Activated T-helper 1 cell treated with anti-CD3 and anti-CD28 coated beads, Interleukin-12 subunit alpha, Interleukin-12 subunit beta, Interleukin-2, Interleukin-4 antibody, amounts not matched to agents 30 ng/mL and 10 ng/mL and 1 ng/mL, durations not matched to agents 14 hours and 24 hours and 36 hours (primary cell): ENCODE measurements at regions of chr11 and their contacts with region 1.

Region 1: DNA sequence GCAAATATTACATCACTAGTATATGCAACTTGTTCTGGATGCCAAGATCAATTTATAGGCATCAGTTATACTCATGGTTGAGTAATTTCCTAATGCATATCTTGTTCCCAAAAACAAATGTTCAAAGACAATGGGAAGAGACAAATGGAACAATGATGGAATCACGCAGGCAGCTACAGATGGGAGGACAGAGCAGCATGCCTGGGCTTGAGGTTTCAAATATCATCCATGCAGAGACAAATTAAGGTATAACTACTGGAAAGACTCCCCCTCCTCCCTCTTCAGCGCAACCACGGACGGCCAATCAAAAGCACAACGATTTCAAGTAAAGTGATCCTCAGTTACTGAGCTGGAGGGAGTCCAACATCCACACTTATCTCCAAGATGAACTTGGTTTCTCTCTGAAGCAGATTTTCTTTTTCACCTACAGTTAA is 106.8 kb downstream of the CCDC83 start:
- DNase-seq: no peak
- H3K4me3 Mint-ChIP-seq: no peak overlapping the region
- H3K27ac Mint-ChIP-seq: no peak overlapping the region
- H3K4me1 Mint-ChIP-seq: peaks cover 18% of the 10 kb centered on the region
- H3K27me3 Mint-ChIP-seq: no peaks in the 10 kb centered on the region

Region 2: GRCh38 chr11:86003654-86004053 is 41.7 kb after region 1 on chr11:
- intact Hi-C with region 1: loop called (anchors 5 kb)
- DNase-seq: no peak
- H3K4me3 Mint-ChIP-seq: no peak overlapping the region
- H3K27ac Mint-ChIP-seq: no peak overlapping the region
- H3K4me1 Mint-ChIP-seq: peaks cover 19% of the 10 kb centered on the region
- H3K27me3 Mint-ChIP-seq: no peaks in the 10 kb centered on the region